ENCODE measurements at regions of chr11 and their contacts with region 1.

Region 1: DNA sequence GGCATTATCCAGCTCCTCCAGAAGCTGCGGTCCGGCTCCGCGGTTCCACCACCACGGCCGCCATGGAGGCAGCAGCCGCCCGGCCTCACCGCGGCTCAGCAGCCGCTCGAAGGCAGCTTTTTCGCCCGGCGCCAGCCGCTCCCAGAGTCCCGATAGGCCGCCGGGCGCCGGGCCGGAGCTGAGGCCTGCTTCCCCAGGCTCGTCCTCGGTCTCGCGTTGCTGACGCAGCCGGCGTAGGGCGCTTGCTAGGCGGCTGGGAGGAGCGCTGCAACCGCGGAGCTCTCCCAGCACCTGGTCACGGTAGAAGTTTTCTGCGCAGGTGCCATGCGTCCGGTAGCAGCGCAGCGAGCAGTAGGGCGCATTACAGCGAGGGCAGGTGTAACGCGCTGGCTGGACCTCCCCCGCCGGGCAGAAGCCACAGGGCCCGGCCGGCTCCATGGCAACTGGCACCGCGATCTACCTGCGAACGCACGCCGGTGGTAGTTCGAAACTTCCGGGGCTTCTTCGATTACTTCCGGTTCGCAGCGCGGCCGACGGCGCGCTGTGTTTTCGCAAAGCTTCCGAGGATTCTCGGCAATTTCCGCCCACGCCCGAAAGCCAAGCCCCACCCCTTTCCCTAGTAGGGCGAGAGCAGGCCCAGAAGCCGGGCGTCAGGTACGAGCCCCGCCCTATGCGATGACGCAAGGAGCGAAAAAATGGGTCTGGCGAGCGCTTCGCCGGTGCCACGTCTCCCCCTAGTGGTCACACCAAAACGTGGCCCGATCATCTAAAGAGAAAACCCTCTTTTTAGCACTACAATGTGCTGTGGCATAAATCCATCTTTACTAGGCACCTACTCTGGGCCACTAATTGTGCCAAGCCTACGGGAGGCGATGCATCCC is at the start of gene ZNHIT2:
- DNase-seq: peak; percentile 100
- H3K4me3 ChIP-seq: peak within 1 kb of the TSS; percentile 77 to 99 (median 93)
- H3K27ac ChIP-seq: peak within 1 kb of the TSS; percentile 79 to 98 (median 88)
- H3K4me1 ChIP-seq: peaks cover 31 to 89% (median 66%) of the 10 kb centered on the region in 6 donors
- H3K27me3 ChIP-seq: no peaks in the 10 kb centered on the region
- CTCF ChIP-seq: peak; percentile 79 to 99 (median 95)
- POLR2A ChIP-seq: peak in 1 of 3 donors; percentile 33
- total RNA-seq, gene ZNHIT2: 7.9 to 16.4 (median 10.2) TPM

Region 2: DNA sequence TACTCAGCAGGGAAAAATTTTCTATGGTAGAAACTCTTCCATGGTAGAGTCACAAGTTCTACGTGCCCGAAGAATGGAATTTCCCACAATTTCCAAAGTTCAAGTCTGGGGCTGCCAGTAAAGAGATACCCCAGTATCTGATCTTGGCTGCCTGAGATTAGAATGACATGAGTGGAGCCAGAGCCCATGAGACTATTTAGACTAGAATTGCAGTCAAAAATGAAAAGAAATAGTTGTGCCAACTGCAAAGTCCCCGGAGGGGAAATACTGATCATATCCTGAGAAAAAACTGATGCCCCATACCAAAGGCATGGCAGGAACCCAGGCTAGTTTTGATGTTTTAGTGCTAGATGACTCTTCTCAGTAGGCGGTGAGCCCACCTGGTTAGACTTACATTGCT is 156.7 kb before region 1 on chr11:
- intact Hi-C with region 1: no loop called
- DNase-seq: no peak
- H3K4me3 ChIP-seq: no peak overlapping the region
- H3K27ac ChIP-seq: no peak overlapping the region
- H3K4me1 ChIP-seq: no peaks in the 10 kb centered on the region
- H3K27me3 ChIP-seq: peaks cover 0 to 5% (median 0%) of the 10 kb centered on the region in 7 donors
- CTCF ChIP-seq: no peak
- POLR2A ChIP-seq: no peak

Region 3: GRCh38 chr11:64990222-64990923 is 127.1 kb before region 1 on chr11:
- intact Hi-C with region 1: no loop called
- DNase-seq: peak; percentile 83
- H3K4me3 ChIP-seq: peak overlapping the region in 7 of 8 donors; percentile 1 to 59 (median 25)
- H3K27ac ChIP-seq: peak overlapping the region; percentile 71 to 88 (median 78)
- H3K4me1 ChIP-seq: peaks cover 32 to 82% (median 65%) of the 10 kb centered on the region in 6 donors
- H3K27me3 ChIP-seq: no peaks in the 10 kb centered on the region
- CTCF ChIP-seq: no peak
- POLR2A ChIP-seq: no peak

Region 4: DNA sequence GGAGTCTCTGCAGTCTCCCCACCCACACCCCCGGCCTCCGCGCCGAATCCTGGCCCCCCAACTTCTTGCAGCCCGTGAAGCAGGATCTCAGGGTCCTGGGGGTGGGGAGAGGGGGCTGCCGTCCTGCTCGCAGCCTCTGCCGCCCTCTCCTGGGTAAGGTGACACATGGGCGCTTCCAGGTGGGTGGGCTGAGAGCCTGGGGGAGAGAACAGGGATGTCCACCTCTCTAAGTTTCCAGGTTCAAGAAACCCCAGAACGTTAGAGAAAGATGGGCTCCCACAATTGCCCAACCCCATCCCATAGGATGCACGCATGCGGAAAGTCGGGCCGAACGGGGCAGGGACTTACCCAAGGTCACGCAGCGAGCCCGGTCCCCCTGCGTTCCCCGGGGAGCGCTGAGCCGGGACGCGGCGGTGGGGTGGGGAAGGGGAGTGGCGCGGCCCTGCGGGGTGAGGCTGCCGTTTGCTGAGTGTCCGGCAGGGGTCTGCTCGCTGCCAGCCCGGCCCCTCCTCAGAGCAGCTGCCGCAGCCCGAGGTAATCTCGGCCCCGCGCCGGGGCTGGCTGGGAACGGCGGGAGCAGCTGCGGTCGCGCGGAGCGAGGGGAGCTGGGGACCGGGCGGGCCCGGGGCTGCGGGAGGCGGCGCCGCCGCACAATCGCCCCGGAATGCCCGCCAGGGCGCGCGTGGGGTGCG is 63.6 kb after region 1 on chr11:
- intact Hi-C with region 1: loop called (anchors 5 kb)
- DNase-seq: peak; percentile 91
- H3K4me3 ChIP-seq: peak overlapping the region; percentile 57 to 98 (median 92)
- H3K27ac ChIP-seq: peak overlapping the region; percentile 73 to 96 (median 89)
- H3K4me1 ChIP-seq: peaks cover 21 to 63% (median 36%) of the 10 kb centered on the region in 6 donors
- H3K27me3 ChIP-seq: no peaks in the 10 kb centered on the region
- CTCF ChIP-seq: peak; percentile 39 to 79 (median 64)
- POLR2A ChIP-seq: no peak

Region 5: DNA sequence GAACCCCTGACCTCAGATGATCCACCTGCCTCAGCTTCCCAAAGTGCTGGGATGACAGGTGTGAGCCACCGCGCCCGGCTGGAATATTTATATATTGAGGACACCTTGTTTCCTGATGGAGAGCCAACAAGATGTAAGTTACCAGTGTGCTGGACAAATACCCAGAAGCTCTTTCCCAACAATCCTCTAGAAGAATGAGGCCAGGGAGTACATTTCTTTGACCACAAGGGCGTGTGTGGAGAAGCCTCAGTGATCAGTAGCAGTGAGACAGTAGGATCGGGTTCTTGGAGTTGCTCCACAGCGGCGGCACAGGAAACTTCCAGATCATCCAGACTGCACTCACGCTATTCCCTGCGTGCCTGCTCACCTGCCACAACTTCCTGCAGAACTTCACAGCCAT is 134.0 kb after region 1 on chr11:
- intact Hi-C with region 1: no loop called
- DNase-seq: no peak
- H3K4me3 ChIP-seq: no peak overlapping the region
- H3K27ac ChIP-seq: no peak overlapping the region
- H3K4me1 ChIP-seq: no peaks in the 10 kb centered on the region
- H3K27me3 ChIP-seq: no peaks in the 10 kb centered on the region
- CTCF ChIP-seq: no peak
- POLR2A ChIP-seq: no peak